ENCODE measurements at regions of chr20 and their contacts with region 1.

Region 1: DNA sequence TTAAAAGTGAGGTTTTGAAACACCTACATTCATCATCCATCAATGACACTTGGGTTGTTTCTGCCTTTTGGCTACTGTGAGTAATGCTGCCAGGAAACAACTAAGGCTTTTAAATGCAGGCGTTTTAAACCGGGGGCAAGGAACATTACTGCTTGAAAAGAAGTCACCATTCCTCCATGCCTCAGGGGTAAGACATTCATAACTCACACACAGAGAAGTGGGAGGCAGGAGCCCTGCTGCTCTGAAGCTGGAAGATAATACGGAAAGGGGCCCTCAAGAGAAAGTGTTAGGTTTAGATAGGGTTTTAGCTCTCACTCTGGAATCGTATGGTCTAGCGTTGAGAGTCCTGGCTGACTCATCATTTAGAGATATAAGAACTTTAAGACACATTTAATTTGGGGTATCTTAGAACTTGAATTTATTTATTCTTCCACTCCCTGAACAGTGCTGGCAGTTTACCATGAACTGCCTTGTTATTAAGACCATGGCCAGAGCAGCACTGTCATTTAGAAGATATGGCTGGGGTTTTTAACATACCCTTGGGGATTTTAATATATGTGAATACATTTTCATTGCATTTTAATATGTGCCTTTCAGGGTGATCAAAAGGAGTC is 1.8 kb downstream of the TUBB1 start:
- DNase-seq: no peak
- H3K4me3 Mint-ChIP-seq: no peak overlapping the region
- H3K27ac Mint-ChIP-seq: no peak overlapping the region
- H3K4me1 Mint-ChIP-seq: peaks cover 13% of the 10 kb centered on the region
- H3K27me3 Mint-ChIP-seq: no peaks in the 10 kb centered on the region
- CTCF ChIP-seq: no peak

Region 2: GRCh38 chr20:57596998-57597939 is 1423.8 kb before region 1 on chr20:
- CTCF ChIA-PET with region 1: no interaction called
- intact Hi-C with region 1: no loop called
- DNase-seq: peak; percentile 90
- H3K4me3 Mint-ChIP-seq: peak overlapping the region; percentile 28
- H3K27ac Mint-ChIP-seq: no peak overlapping the region
- H3K4me1 Mint-ChIP-seq: peaks cover 29% of the 10 kb centered on the region
- H3K27me3 Mint-ChIP-seq: peaks cover 20% of the 10 kb centered on the region
- CTCF ChIP-seq: peak; percentile 96

Region 3: DNA sequence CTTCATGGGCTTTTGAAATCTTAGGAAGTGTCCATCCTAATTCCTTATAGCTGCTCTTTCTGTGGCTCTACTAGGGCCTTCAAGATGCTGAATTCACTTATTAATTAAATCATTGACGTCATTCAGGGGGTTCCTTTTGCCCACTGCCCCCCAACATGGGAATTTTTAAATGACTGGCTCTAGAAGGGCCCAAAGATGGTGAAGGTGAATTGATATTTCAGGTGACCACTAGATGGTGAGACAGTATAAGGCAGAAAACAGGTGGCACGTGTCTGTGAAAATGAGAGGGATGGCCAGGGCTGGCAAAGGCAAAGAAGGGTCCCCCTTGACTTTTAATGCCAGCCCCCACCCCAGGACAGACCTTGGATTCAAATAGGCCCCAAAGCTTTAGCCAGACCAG is 156.7 kb before region 1 on chr20:
- CTCF ChIA-PET with region 1: no interaction called
- intact Hi-C with region 1: no loop called
- DNase-seq: peak; percentile 29
- H3K4me3 Mint-ChIP-seq: no peak overlapping the region
- H3K27ac Mint-ChIP-seq: no peak overlapping the region
- H3K4me1 Mint-ChIP-seq: no peaks in the 10 kb centered on the region
- H3K27me3 Mint-ChIP-seq: peaks cover 33% of the 10 kb centered on the region
- CTCF ChIP-seq: peak; percentile 45

Region 4: GRCh38 chr20:59042796-59043660 is 22.0 kb after region 1 on chr20:
- CTCF ChIA-PET with region 1: no interaction called
- intact Hi-C with region 1: loop called (anchors 1 kb)
- DNase-seq: peak; percentile 99
- H3K4me3 Mint-ChIP-seq: peak overlapping the region; percentile 63
- H3K27ac Mint-ChIP-seq: peak overlapping the region; percentile 43
- H3K4me1 Mint-ChIP-seq: peaks cover 27% of the 10 kb centered on the region
- H3K27me3 Mint-ChIP-seq: peaks cover 11% of the 10 kb centered on the region
- CTCF ChIP-seq: no peak